ENCODE measurements at regions of chr10 and their contacts with region 1.

Region 1: DNA sequence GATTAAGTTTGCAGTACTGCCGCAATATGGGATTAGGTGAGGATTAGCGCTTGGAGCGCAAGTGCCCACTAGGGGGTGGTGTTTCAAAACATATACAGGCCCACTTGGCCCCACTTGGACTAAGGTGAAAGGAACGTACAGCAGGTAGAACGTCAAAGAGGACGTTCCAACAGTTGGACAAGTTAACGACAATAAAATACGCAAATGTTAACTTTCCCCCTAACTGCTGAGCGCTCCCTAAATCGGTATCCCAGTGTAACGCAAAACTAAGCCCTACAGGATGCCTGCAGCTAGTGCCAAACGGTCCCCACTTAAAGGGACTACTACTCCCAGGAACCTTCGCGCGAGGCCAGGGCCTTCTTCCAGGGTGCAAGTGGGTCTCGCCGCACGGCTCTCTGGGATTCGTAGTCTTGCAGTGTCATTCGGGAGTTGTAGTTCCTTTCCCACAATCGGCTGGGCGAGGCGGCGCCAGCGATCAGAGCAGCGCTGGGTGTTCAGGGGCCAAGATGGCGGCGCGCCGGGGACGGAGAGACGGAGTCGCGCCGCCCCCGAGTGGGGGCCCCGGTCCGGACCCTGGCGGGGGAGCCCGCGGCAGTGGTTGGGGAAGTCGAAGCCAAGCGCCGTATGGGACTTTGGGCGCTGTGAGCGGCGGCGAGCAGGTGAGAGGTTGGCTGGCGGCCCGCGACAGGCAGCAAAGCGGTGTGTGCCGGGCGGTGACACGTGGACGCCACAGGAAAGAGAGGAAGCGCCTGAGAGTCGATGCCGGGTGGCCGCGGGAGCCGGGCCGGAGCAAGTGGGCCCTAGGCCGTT is at the start of gene PPRC1:
- DNase-seq: peak; percentile 96 to 98 (median 97)
- H3K4me3 ChIP-seq: peak within 1 kb of the TSS; percentile 79 to 98 (median 84)
- H3K4me3 Mint-ChIP-seq: peak within 1 kb of the TSS; percentile 95
- H3K27ac ChIP-seq: peak within 1 kb of the TSS; percentile 90 to 93
- H3K27ac Mint-ChIP-seq: peak within 1 kb of the TSS; percentile 93 to 97 (median 95)
- H3K4me1 ChIP-seq: peaks cover 16 to 25% of the 10 kb centered on the region in 2 donors
- H3K4me1 Mint-ChIP-seq: peaks cover 24% of the 10 kb centered on the region
- H3K27me3 ChIP-seq: no peaks in the 10 kb centered on the region
- H3K27me3 Mint-ChIP-seq: peaks cover 0 to 2% (median 0%) of the 10 kb centered on the region in 3 donors
- CTCF ChIP-seq: peak; percentile 99
- polyA plus RNA-seq, gene PPRC1: 1.1 to 15.6 (median 2.5) TPM

Region 2: GRCh38 chr10:102055647-102056419 is 76.9 kb before region 1 on chr10 and contains the start of gene ARMH3:
- intact Hi-C with region 1: loop called in 1 of 2 experiments (anchors 5 kb)
- DNase-seq: peak; percentile 87 to 95 (median 90)
- H3K4me3 ChIP-seq: peak within 1 kb of the TSS; percentile 89 to 95 (median 95)
- H3K4me3 Mint-ChIP-seq: peak within 1 kb of the TSS; percentile 93 to 96
- H3K27ac ChIP-seq: peak within 1 kb of the TSS; percentile 94 to 98
- H3K27ac Mint-ChIP-seq: peak within 1 kb of the TSS; percentile 92 to 98 (median 96)
- H3K4me1 ChIP-seq: peaks cover 40 to 47% of the 10 kb centered on the region in 2 donors
- H3K4me1 Mint-ChIP-seq: peaks cover 48% of the 10 kb centered on the region
- H3K27me3 ChIP-seq: no peaks in the 10 kb centered on the region
- H3K27me3 Mint-ChIP-seq: peaks cover 0 to 4% (median 1%) of the 10 kb centered on the region in 3 donors
- CTCF ChIP-seq: no peak
- polyA plus RNA-seq, gene ARMH3: 20.4 to 26.3 (median 22.1) TPM

Region 3: DNA sequence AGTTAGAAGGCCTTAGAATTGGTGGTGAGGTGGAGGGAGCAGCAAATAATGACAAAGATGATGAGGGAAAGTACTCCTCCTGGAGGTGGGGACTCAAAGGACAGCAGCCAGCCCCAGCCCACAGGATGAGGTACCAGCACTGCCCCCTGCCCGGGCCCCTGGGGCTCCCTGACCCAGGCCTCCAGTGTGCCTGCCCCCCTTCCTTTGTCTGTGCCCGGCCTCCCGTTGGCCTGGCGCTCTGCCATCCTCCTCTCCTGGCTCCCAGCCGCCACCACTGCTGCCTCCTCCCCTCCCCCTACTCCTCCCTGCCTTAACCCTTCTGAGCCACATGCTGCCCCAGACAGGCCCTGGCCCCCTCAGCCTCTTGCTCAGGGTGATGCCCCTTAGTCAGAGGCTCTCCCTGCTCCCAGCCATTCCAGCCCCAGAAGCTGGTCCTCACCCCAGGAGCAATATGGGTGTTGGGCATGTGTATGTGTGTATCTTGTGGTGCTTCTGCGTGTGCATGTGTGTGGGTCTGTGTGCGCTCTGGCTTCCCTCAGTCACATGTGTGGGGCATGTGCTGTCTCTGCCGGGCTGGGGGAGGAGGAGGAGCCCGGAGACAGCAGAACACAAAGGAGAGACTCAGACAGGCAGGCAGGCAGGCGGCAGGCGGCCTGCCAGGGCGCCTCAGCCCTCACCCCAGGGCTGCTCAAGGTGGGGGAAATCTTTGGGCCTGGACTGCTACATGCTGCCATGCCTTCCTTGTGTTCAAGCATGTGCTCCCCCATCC is 15.2 kb before region 1 on chr10:
- intact Hi-C with region 1: loop called in 1 of 2 experiments (anchors 2 kb)
- DNase-seq: peak in 1 of 3 donors; percentile 19
- H3K4me3 ChIP-seq: peak overlapping the region in 1 of 3 experiments; percentile 96
- H3K4me3 Mint-ChIP-seq: peak overlapping the region; percentile 83 to 93
- H3K27ac ChIP-seq: peak overlapping the region; percentile 43 to 94
- H3K27ac Mint-ChIP-seq: peak overlapping the region; percentile 76 to 95 (median 87)
- H3K4me1 ChIP-seq: peaks cover 72 to 78% of the 10 kb centered on the region in 2 donors
- H3K4me1 Mint-ChIP-seq: peaks cover 72% of the 10 kb centered on the region
- H3K27me3 ChIP-seq: no peaks in the 10 kb centered on the region
- H3K27me3 Mint-ChIP-seq: peaks cover 0 to 6% (median 3%) of the 10 kb centered on the region in 3 donors
- CTCF ChIP-seq: no peak

Region 4: GRCh38 chr10:102151774-102152544 is 19.2 kb after region 1 on chr10 and contains the start of gene NOLC1:
- intact Hi-C with region 1: loop called in 1 of 2 experiments (anchors 2 kb)
- DNase-seq: peak; percentile 97 to 99 (median 99)
- H3K4me3 ChIP-seq: peak within 1 kb of the TSS; percentile 73 to 93 (median 75)
- H3K4me3 Mint-ChIP-seq: peak within 1 kb of the TSS; percentile 87 to 95
- H3K27ac ChIP-seq: peak within 1 kb of the TSS; percentile 78 to 92
- H3K27ac Mint-ChIP-seq: peak within 1 kb of the TSS; percentile 90 to 96 (median 94)
- H3K4me1 ChIP-seq: peaks cover 13 to 19% of the 10 kb centered on the region in 2 donors
- H3K4me1 Mint-ChIP-seq: peaks cover 18% of the 10 kb centered on the region
- H3K27me3 ChIP-seq: no peaks in the 10 kb centered on the region
- H3K27me3 Mint-ChIP-seq: peaks cover 0 to 4% (median 0%) of the 10 kb centered on the region in 3 donors
- CTCF ChIP-seq: no peak
- polyA plus RNA-seq, gene NOLC1: 10.0 to 32.1 (median 19.3) TPM

Measured in CD14-positive monocyte (primary cell).